Astrocyte of the cerebellum (primary cell): ENCODE measurements at regions of chr10 and their contacts with region 1.

Region 1: GRCh38 chr10:132616170-132616995 is 78.8 kb downstream of the INPP5A start:
- DNase-seq: no peak
- H3K4me3 ChIP-seq: no peak overlapping the region
- CTCF ChIP-seq: no peak

Region 2: DNA sequence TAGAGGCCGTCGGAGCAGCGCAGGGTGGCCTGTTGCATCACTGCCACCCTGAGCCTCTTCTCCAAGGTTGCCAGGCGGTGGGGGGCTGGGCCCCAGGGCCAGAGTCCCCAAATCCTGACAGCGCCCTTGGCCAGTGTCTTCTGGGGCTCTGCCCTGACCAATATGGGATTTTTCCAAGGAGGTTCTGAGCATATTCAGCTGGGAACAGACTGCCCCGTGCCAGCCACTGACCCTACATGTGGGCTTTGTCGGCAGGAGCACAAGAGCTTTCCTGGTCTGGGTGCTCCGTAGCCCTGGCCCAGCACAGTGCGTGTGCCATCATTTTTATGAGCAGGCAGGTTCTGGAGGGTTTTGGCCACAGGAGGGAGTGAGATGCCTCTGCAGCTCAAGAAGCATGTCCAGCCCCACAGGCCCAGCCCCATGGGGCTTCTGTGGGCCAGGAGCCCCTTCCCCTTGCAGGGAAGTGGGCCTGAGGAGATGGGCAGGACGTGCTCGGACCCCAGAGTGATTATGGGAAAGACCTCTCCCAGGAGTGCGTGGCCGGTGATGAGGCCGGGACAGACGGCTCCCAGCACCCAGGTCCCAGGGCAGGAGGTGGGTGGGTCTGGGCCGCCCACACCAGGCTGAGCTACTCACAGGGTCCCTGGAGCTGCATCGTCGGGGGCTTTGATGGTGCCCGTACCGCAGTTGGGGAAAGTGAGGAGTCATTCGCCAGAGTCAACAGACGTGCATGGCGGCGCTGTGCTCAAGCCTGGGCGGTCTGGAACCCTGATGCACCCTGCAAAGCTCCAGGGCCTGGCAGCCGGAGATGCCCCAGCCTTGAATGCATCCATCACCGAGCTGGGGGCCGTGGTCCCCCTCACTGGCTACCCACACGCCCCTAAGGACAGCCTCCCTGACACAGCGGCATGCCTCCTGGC is 152.8 kb before region 1 on chr10:
- in situ Hi-C with region 1: loop called (anchors 5 kb)
- DNase-seq: no peak
- H3K4me3 ChIP-seq: no peak overlapping the region
- CTCF ChIP-seq: peak; percentile 27

Region 3: GRCh38 chr10:132520177-132520811 is 96.1 kb before region 1 on chr10:
- in situ Hi-C with region 1: loop called (anchors 5 kb)
- DNase-seq: peak; percentile 68
- H3K4me3 ChIP-seq: no peak overlapping the region
- CTCF ChIP-seq: no peak

Region 4: DNA sequence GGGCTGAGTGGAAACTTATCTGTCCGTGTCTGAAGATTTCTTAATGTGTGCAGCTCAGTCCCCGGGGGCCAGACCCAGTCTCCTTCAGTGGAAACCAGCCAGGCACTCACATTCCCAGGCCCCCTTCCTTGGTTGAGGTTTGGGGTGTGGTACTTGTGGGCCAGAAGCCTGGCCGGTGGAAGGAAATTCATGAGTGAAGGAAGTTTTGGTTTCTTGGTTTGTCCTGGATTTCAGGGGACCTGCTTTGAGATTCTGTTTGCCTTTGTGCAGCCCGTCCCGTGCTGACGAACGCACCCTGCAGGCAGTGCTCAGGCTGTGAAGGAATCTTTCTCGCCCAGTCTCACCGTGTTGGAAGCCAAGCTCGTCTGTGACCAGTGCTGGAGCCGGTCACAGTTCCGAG is 75.9 kb before region 1 on chr10:
- in situ Hi-C with region 1: loop called (anchors 10 kb)
- DNase-seq: no peak
- H3K4me3 ChIP-seq: peak overlapping the region; percentile 22
- CTCF ChIP-seq: peak; percentile 47

Region 5: DNA sequence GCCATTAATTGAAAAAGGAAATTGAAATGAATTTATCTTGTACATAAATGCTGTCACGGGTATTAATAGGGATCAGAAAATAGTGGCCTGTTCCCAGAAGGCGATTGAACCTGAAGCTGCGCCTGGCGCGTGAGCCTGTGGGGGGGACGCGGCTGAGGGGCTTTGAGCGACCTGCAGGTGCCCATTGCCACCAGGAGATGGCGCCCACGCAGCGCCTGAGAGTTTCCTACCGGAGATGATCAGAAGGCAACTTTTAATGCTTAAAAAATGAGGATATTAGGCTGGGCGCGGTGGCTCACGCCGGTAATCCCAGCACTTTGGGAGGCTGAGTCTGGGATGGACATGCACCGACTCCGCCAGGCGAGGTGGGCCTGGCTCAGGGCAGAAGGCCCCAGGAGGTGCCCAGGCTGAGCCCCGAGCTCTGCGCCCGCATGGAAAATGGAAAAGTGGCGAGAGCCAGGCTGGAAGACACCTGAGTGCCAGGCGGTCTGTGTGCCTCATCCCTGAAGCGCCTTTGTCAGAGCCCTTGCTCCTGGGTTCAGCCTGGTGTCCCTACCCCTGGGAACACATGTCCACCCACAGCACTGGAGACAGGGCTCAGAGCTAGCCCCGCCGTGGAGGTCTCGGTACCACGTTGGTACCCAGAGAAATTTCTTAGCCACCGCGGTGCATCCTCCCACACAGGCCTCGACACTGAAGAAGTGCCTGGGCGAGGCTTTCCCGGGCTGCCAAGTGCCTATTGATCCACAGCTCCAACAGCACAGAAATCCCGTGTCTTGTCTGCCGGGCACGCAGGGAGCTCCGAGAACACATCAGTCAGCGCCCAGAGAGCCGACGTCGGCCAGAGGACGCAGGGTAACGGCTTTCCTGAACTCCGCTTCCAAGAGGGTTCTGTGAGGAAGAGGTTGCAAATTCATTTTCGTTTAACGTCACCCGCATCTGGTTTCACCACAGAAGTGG is 38.6 kb after region 1 on chr10:
- in situ Hi-C with region 1: loop called (anchors 5 kb)
- DNase-seq: peak; percentile 33
- H3K4me3 ChIP-seq: no peak overlapping the region
- CTCF ChIP-seq: peak; percentile 96